Activated CD8-positive, alpha-beta T cell treated with anti-CD3 and anti-CD28 coated beads for 36 hours (primary cell): ENCODE measurements at regions of chr3 and their contacts with region 1.

Region 1: GRCh38 chr3:71583566-71584449 is at the start of gene FOXP1:
- DNase-seq: peak; percentile 79
- ATAC-seq: peak; percentile 56
- H3K4me3 Mint-ChIP-seq: peak within 1 kb of the TSS; percentile 84
- H3K27ac Mint-ChIP-seq: peak within 1 kb of the TSS; percentile 99
- H3K4me1 Mint-ChIP-seq: peaks cover 60% of the 10 kb centered on the region
- H3K27me3 Mint-ChIP-seq: no peaks in the 10 kb centered on the region
- CTCF ChIP-seq: no peak
- total RNA-seq, gene FOXP1: 145 to 153 TPM

Region 2: GRCh38 chr3:71006810-71007785 is 576.7 kb before region 1 on chr3:
- CTCF ChIA-PET with region 1: no interaction called
- POLR2A ChIA-PET with region 1: no interaction called
- intact Hi-C with region 1: loop called (anchors 10 kb)
- DNase-seq: no peak
- ATAC-seq: no peak
- H3K4me3 Mint-ChIP-seq: no peak overlapping the region
- H3K27ac Mint-ChIP-seq: peak overlapping the region; percentile 93
- H3K4me1 Mint-ChIP-seq: peaks cover 73% of the 10 kb centered on the region
- H3K27me3 Mint-ChIP-seq: no peaks in the 10 kb centered on the region
- CTCF ChIP-seq: peak; percentile 63

Region 3: DNA sequence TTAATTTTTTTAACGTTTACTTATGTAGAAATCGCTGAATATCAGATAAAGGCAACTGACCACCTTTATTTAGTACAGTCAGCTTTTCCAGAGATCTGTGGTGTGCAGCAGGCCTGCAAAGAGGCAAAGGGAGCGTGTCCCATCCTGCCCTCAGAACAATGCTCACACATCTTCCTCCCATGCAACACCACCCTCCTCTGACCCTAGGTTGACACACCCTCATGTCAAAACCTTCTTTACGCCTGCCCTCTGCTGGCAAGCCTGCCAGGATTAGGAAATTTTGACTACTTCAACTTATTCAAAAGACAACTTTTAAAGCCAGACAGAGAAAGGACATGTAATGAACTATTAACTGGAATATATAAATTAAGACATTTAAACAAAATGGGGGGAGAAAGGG is 514.0 kb before region 1 on chr3:
- CTCF ChIA-PET with region 1: no interaction called
- POLR2A ChIA-PET with region 1: interaction called, 49 read pairs
- intact Hi-C with region 1: loop called (anchors 5 kb)
- DNase-seq: peak; percentile 88
- ATAC-seq: peak; percentile 43
- H3K4me3 Mint-ChIP-seq: peak overlapping the region; percentile 9
- H3K27ac Mint-ChIP-seq: peak overlapping the region; percentile 79
- H3K4me1 Mint-ChIP-seq: peaks cover 86% of the 10 kb centered on the region
- H3K27me3 Mint-ChIP-seq: no peaks in the 10 kb centered on the region
- CTCF ChIP-seq: peak; percentile 51

Region 4: DNA sequence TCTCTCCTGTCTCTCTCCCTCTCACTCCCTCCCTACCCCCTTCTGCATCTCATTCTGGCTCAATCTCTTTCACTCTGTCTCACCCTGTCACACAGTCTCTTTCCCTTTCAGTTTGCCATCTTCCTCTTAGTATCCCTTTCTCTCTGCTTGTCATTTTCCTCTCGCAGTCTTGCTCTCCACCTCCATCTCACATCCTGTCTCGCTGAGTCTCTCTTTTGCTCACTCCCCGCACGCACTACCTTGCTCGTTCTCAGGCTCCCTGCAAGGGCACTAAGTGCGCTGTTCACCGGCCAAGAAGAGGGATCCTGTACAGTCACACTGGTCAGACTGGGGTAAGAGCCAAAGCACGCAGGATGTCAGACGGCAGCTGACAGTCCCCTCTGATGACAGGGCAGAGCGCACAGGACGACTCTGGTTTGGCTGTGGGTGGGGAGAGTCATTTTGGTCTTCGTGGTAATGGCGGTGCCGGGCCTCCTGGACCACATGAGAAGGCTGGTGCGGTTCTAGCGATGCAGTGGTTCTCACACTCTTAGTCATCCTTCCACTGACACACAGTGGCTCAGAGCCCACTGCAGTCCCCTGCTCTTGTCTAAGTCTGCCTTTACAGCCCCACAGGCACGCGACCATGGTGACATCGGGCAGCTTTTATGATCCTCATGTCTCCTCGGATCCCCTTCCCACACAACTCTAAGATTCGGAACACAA is 357.1 kb before region 1 on chr3:
- CTCF ChIA-PET with region 1: interaction called, 5 read pairs
- POLR2A ChIA-PET with region 1: interaction called, 17 read pairs
- intact Hi-C with region 1: loop called (anchors 2 kb)
- DNase-seq: peak; percentile 95
- ATAC-seq: peak; percentile 88
- H3K4me3 Mint-ChIP-seq: peak overlapping the region; percentile 76
- H3K27ac Mint-ChIP-seq: peak overlapping the region; percentile 96
- H3K4me1 Mint-ChIP-seq: peaks cover 83% of the 10 kb centered on the region
- H3K27me3 Mint-ChIP-seq: no peaks in the 10 kb centered on the region
- CTCF ChIP-seq: no peak

Region 5: GRCh38 chr3:71423151-71423906 is 160.5 kb before region 1 on chr3:
- CTCF ChIA-PET with region 1: interaction called, 3 read pairs
- POLR2A ChIA-PET with region 1: interaction called, 10 read pairs
- intact Hi-C with region 1: no loop called
- DNase-seq: no peak
- ATAC-seq: no peak
- H3K4me3 Mint-ChIP-seq: no peak overlapping the region
- H3K27ac Mint-ChIP-seq: peak overlapping the region; percentile 90
- H3K4me1 Mint-ChIP-seq: peaks cover 93% of the 10 kb centered on the region
- H3K27me3 Mint-ChIP-seq: no peaks in the 10 kb centered on the region
- CTCF ChIP-seq: no peak

Region 6: DNA sequence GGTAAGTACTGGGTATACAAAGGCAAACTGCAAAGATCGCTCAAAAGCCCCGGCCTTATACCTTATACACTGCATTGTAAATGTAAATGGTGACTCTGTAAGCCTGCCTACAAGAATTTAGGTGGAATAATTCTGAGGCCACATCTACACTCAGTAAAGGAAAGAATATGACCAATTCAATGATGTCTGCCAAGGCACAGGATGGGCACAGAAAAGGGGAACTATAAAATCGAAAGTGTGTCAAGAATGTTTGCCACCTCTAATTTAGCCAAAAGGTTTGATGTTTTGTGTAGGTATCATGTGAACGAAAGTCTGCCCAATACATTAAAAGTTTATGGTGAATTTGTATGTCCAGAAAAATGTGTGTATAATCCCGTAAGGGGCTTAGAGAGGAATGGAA is 96.4 kb before region 1 on chr3:
- CTCF ChIA-PET with region 1: interaction called, 3 read pairs
- POLR2A ChIA-PET with region 1: interaction called, 12 read pairs
- intact Hi-C with region 1: no loop called
- DNase-seq: no peak
- ATAC-seq: peak; percentile 29
- H3K4me3 Mint-ChIP-seq: peak overlapping the region; percentile 72
- H3K27ac Mint-ChIP-seq: peak overlapping the region; percentile 98
- H3K4me1 Mint-ChIP-seq: peaks cover 83% of the 10 kb centered on the region
- H3K27me3 Mint-ChIP-seq: no peaks in the 10 kb centered on the region
- CTCF ChIP-seq: no peak